Aorta (tissue), 5 donors: ENCODE measurements at regions of chr4 and their contacts with region 1.

Region 1: DNA sequence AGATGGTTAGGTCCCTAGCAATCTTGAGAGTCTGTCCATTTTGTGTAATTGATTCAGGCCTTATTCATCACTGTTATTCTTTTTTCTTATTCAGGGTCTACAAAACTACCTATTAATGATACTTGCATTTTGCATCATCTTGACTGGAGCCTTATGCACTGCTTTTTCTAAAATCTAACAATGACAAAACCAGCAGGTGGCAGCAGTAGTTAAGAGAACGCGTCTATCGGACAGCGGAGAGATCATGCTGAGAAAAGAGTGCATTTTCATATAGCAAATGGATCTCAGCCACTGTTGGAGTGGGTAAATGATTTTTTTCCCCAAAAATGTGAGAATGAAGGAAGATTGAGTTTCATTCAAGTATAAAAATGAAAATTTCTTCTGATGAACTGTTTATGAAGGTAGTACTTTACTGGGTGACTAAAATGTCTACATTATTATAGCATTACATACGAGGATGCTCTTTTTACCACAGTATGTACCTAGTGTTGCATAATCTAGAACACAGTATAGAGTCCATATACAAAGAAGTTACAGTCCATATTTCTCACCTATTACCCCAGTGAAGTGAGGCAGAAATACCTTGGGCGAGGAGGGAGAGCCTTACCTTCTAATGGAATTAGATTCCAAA is 43.2 kb downstream of the TMEM144 start:
- DNase-seq: peak in 1 of 2 donors; percentile 47
- ATAC-seq: peak; percentile 78
- H3K4me3 ChIP-seq: no peak overlapping the region
- H3K27ac ChIP-seq: no peak overlapping the region
- H3K4me1 ChIP-seq: no peaks in the 10 kb centered on the region
- H3K27me3 ChIP-seq: no peaks in the 10 kb centered on the region

Region 2: GRCh38 chr4:158161551-158162354 is 91.7 kb before region 1 on chr4:
- intact Hi-C with region 1: no loop called
- DNase-seq: peak in 1 of 2 donors; percentile 73
- ATAC-seq: peak; percentile 74
- H3K4me3 ChIP-seq: peak overlapping the region in 1 of 2 donors; percentile 64
- H3K27ac ChIP-seq: peak overlapping the region; percentile 62 to 93
- H3K4me1 ChIP-seq: peaks cover 12 to 22% of the 10 kb centered on the region in 2 donors
- H3K27me3 ChIP-seq: no peaks in the 10 kb centered on the region

Region 3: DNA sequence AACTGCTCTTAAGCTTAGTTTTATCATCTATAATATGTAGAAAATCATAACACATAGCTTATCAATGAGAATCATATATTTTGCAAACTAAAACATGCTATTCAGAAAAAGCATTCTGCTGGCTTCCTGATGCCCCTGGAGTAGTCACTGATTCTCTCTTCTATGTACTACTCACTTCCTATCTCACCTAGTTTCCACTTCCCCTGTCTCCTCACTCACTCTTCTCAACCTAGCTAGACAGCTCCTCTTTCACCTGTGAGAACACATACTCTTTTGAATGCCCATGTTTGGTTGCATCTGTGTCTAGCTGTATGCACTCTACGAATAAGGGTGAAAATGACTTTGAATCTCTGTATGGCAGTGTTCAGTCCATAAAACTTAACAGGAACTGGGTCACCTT is 33.8 kb before region 1 on chr4:
- intact Hi-C with region 1: loop called in 1 of 2 experiments (anchors 5 kb)
- DNase-seq: no peak
- ATAC-seq: no peak
- H3K4me3 ChIP-seq: no peak overlapping the region
- H3K27ac ChIP-seq: no peak overlapping the region
- H3K4me1 ChIP-seq: peaks cover 0 to 8% of the 10 kb centered on the region in 2 donors
- H3K27me3 ChIP-seq: no peaks in the 10 kb centered on the region